Heart left ventricle (tissue), 16 donors: ENCODE measurements at regions of chr15 and their contacts with region 1.

Region 1: DNA sequence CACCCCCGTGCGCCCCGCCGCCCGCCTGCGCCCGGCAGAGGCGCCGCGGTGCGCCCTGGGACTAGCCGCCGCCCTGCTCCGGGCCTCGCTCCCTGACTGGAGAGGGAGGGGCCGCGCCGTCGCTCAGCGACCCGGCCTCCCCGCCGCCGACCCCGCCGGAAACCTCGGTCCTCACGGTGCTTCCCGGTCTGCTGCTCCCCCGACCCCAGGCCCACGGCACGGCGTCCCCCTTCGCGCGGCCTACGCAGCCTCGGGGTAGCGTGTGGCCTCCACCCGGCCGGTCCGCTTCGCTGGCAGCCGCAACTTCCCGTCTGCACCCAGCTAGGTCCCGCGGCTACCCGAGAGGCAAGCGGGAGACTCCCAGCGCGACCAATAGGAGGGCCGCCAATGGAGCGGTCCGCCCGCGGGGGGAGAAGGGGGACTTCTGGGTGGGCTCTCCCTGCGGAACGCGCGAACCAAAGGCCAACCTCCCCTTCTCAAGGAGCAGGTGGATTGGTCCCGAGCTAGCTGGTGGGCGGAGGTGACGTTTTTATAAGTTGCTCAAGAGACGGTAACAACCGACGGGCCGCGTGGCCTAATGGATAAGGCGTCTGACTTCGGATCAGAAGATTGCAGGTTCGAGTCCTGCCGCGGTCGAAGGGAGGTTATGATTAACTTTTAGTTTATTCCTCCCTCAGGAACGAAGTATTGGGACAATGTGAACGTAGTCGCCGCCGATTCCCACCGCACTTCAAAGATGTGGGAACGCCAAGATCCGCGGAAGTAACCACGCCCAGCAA is at the start of gene POLG:
- DNase-seq: peak; percentile 99
- ATAC-seq: peak; percentile 96 to 99 (median 98)
- H3K4me3 ChIP-seq: peak within 1 kb of the TSS; percentile 60 to 97 (median 82)
- H3K27ac ChIP-seq: peak within 1 kb of the TSS; percentile 21 to 98 (median 94)
- H3K4me1 ChIP-seq: peaks cover 6 to 54% (median 44%) of the 10 kb centered on the region in 12 donors
- H3K27me3 ChIP-seq: no peaks in the 10 kb centered on the region
- CTCF ChIP-seq: peak in 1 of 12 donors; percentile 13
- POLR2A ChIP-seq: peak; percentile 73 to 96
- total RNA-seq, gene POLG: 32.1 to 79.8 (median 38.4) TPM

Region 2: DNA sequence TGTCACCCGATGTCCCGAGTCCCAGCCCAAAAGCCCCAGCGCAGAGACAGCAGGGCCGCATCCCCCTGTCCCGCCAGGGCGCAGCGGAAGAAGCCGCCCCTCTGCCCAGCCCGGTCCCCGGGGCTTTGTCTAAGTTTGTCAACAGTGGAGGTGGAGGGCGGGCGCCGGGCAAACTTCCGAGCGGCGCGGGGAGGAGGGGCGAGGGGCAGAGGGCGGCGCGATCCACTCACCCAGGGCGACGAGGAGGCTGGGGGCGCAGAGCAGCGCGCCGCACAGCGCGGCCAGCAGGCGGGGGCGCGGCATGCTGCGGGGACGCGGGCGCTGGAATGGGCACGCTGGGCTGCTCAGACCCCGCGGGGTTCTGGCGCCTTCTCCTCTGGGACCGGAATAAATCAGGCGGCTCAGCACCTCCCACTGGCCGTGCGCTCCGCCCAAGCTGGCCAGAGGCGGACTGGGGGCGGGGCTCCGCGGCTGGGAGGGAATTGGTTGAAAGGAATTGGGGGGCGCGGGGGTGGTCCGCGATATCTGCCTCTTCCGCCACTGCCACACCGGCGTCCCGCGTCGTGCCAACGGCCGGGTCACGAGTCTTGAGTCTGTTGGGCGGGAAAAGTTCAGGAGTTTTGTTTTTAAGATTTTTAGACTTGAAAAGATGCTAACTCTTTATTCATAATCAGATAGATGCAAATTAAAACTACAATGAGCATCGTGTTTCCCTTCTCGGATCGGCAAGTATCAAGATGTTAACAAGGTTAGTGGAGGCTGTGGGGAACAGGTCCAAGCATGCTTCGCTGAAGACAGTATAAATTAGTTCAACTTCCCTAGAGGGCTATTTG is 421.5 kb before region 1 on chr15 and contains the start of gene MFGE8:
- intact Hi-C with region 1: loop called in 1 of 10 experiments (anchors 10 kb)
- DNase-seq: peak; percentile 84 to 90 (median 87)
- ATAC-seq: peak; percentile 40 to 88 (median 79)
- H3K4me3 ChIP-seq: peak within 1 kb of the TSS; percentile 61 to 94 (median 83)
- H3K27ac ChIP-seq: peak within 1 kb of the TSS; percentile 84 to 98 (median 92)
- H3K4me1 ChIP-seq: peaks cover under 1 to 60% (median 37%) of the 10 kb centered on the region in 12 donors
- H3K27me3 ChIP-seq: no peaks in the 10 kb centered on the region
- CTCF ChIP-seq: peak in 6 of 12 donors; percentile 10 to 41 (median 20)
- POLR2A ChIP-seq: peak; percentile 45 to 99
- total RNA-seq, gene MFGE8: 352 to 732 (median 556) TPM

Region 3: DNA sequence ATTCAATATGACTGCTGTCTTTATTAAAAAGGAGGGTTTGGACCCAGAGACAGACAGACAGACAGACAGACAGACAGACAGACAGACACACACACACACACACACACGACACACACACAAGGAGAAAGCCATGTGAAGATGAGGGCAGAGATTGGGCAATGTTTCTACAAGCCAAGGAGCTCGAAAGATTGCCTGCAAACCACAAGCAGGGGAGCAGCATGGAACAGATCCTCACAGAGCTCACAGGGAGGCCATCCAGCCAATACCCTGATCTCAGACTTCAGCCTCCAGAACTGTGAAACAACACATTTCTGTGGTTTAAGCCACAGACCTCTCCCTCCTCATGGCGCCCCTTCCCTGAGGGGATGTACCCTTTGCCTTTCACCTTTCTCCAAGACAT is 282.2 kb before region 1 on chr15:
- intact Hi-C with region 1: no loop called
- DNase-seq: no peak
- ATAC-seq: peak in 1 of 4 donors; percentile 38
- H3K4me3 ChIP-seq: no peak overlapping the region
- H3K27ac ChIP-seq: peak overlapping the region in 8 of 12 donors; percentile 27 to 77 (median 52)
- H3K4me1 ChIP-seq: peaks cover 0 to 12% (median 2%) of the 10 kb centered on the region in 12 donors
- H3K27me3 ChIP-seq: no peaks in the 10 kb centered on the region
- CTCF ChIP-seq: no peak
- POLR2A ChIP-seq: no peak

Region 4: GRCh38 chr15:89395996-89396395 is 61.3 kb after region 1 on chr15:
- intact Hi-C with region 1: no loop called
- DNase-seq: no peak
- ATAC-seq: no peak
- H3K4me3 ChIP-seq: no peak overlapping the region
- H3K27ac ChIP-seq: no peak overlapping the region
- H3K4me1 ChIP-seq: peaks cover 0 to 17% (median 11%) of the 10 kb centered on the region in 12 donors
- H3K27me3 ChIP-seq: peaks cover 36 to 100% (median 61%) of the 10 kb centered on the region in 9 donors
- CTCF ChIP-seq: no peak
- POLR2A ChIP-seq: no peak

Region 5: GRCh38 chr15:89575146-89575655 is 240.5 kb after region 1 on chr15 and contains the start of gene TICRR:
- intact Hi-C with region 1: loop called in 1 of 10 experiments (anchors 10 kb)
- DNase-seq: peak; percentile 94 to 97 (median 96)
- ATAC-seq: peak; percentile 98 to 100 (median 99)
- H3K4me3 ChIP-seq: peak within 1 kb of the TSS; percentile 34 to 95 (median 66)
- H3K27ac ChIP-seq: no peak within 1 kb of the TSS
- H3K4me1 ChIP-seq: peaks cover 0 to 21% (median 8%) of the 10 kb centered on the region in 12 donors
- H3K27me3 ChIP-seq: peaks cover 0 to 4% (median 0%) of the 10 kb centered on the region in 9 donors
- CTCF ChIP-seq: no peak
- POLR2A ChIP-seq: no peak
- total RNA-seq, gene TICRR: 0.05 to 1.4 (median 0.10) TPM in 6 of 9 donors, not detected in the others